ENCODE measurements at regions of chr18 and their contacts with region 1.

Region 1: GRCh38 chr18:13216092-13216582 is 2.4 kb upstream of the LDLRAD4 start:
- DNase-seq: peak; percentile 78
- H3K4me3 Mint-ChIP-seq: peak overlapping the region; percentile 68
- H3K27ac Mint-ChIP-seq: no peak overlapping the region
- H3K4me1 Mint-ChIP-seq: peaks cover 29% of the 10 kb centered on the region
- H3K27me3 Mint-ChIP-seq: peaks cover 22% of the 10 kb centered on the region

Region 2: GRCh38 chr18:13136904-13137669 is 79.0 kb before region 1 on chr18:
- CTCF ChIA-PET with region 1: no interaction called
- intact Hi-C with region 1: no loop called
- DNase-seq: peak; percentile 55
- H3K4me3 Mint-ChIP-seq: peak overlapping the region; percentile 96
- H3K27ac Mint-ChIP-seq: peak overlapping the region; percentile 75
- H3K4me1 Mint-ChIP-seq: peaks cover 24% of the 10 kb centered on the region
- H3K27me3 Mint-ChIP-seq: no peaks in the 10 kb centered on the region

Region 3: DNA sequence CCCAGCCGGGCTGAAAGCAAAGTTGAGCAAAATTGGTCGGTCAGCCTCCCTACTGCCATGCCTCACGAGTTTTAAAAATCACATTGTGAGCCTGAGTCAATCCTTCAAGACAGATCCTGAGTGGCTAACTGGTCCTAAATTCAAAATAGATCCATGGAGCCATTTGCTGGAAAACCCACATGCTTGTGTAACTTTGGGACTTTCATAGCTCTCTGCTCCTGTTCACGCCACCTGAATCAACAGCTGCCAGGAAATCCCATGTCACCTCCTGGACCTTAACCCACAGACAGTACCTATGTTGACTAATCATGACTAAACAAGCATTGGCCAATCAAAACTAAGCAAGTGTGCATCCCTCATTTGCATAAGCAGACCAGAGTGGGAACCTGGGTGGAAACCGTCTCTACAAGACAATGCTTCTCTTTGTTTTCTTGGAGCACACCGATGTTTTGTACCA is 40.4 kb before region 1 on chr18:
- CTCF ChIA-PET with region 1: interaction called, 5 read pairs
- intact Hi-C with region 1: loop called (anchors 2 kb)
- DNase-seq: peak; percentile 72
- H3K4me3 Mint-ChIP-seq: no peak overlapping the region
- H3K27ac Mint-ChIP-seq: no peak overlapping the region
- H3K4me1 Mint-ChIP-seq: peaks cover 12% of the 10 kb centered on the region
- H3K27me3 Mint-ChIP-seq: no peaks in the 10 kb centered on the region

Region 4: DNA sequence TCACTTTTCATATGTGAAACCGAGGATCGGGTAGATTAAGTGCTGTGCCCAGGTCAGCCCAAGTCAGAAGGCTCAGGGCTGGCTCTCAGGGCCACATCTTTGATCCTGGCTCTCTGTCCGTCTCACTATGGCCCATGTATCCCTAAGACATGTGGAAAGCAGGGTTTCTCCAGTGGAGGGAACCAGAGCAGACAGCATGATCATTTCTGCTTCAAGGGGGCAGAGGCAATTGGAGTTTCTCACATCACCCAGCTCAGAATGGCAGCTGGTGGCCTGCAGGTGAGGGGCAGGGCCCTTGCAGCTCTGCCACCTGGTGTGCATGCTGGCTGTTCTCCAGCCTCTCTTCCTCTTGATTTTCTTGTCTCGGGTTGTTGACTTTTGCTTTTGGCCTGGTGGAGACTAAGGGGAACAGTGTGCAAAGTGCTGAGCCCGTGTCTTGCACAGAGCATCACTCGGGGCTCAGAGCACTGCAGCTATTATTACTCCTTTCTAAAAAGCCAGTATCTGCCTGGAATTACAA is 29.4 kb after region 1 on chr18:
- CTCF ChIA-PET with region 1: no interaction called
- intact Hi-C with region 1: no loop called
- DNase-seq: no peak
- H3K4me3 Mint-ChIP-seq: no peak overlapping the region
- H3K27ac Mint-ChIP-seq: no peak overlapping the region
- H3K4me1 Mint-ChIP-seq: no peaks in the 10 kb centered on the region
- H3K27me3 Mint-ChIP-seq: no peaks in the 10 kb centered on the region

Region 5: GRCh38 chr18:13313006-13313686 is 97.0 kb after region 1 on chr18:
- CTCF ChIA-PET with region 1: no interaction called
- intact Hi-C with region 1: loop called (anchors 5 kb)
- DNase-seq: peak; percentile 43
- H3K4me3 Mint-ChIP-seq: peak overlapping the region; percentile 33
- H3K27ac Mint-ChIP-seq: no peak overlapping the region
- H3K4me1 Mint-ChIP-seq: peaks cover 40% of the 10 kb centered on the region
- H3K27me3 Mint-ChIP-seq: no peaks in the 10 kb centered on the region

Region 6: DNA sequence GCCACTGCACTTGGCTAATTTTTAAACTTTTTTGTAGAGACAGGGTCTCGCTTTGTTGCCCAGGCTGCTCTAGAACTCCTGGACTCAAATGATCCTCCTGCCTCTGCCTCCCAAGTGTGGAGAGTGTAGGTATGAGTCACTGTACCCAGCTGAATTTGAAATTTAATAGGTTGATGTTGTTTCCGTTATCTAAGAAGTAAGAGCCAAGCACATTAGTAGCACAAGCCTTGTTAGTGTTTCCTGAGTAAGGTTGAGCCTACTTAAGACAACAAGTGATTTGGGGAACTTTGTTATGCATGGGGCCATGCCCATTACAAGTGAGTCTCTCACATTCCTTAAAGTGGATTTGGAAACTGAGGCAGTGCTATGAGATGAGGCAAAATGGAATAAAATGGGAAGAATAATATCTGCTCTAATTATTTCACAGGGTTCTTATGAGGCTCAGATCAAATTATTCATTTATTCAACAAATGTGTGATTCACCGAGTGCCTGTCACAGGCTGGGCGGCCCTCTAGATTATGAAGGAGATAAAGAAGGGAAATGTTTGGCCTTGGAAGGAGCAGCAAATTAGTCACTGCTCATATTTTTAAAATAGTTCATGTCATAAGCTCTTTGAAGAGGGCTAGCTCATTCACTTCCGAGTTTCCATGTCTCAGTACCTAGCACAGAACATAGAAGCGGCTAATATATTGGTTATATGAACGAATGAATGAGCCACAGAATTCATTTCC is 219.6 kb after region 1 on chr18:
- CTCF ChIA-PET with region 1: interaction called, 6 read pairs
- intact Hi-C with region 1: loop called (anchors 1 kb)
- DNase-seq: no peak
- H3K4me3 Mint-ChIP-seq: no peak overlapping the region
- H3K27ac Mint-ChIP-seq: no peak overlapping the region
- H3K4me1 Mint-ChIP-seq: peaks cover 58% of the 10 kb centered on the region
- H3K27me3 Mint-ChIP-seq: no peaks in the 10 kb centered on the region

Region 7: DNA sequence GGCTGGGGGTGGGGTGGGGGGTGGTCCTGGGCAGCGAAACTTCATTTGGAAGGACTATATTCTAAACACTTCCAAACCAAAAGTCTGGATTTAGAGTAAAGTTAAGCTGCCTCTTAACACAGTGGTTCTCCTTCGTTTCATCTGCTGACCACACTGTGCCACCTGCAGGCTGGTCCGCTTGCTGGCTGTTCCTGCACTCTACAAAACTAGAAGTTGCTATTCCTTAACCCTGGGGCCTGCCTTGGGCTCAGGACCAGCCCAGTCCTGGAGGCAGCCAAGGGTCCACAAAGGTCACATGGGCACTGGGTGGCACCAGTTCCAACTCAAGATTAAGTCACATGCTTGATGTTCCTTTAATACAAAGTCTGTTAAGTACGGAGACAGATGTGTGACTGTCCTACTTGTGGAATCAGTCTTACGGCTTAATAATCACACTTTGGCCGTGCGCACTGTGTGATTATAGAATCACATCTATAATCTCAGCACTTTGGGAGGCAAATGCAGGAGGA is 314.8 kb after region 1 on chr18:
- CTCF ChIA-PET with region 1: interaction called, 15 read pairs
- intact Hi-C with region 1: loop called (anchors 1 kb)
- DNase-seq: peak; percentile 51
- H3K4me3 Mint-ChIP-seq: no peak overlapping the region
- H3K27ac Mint-ChIP-seq: peak overlapping the region; percentile 6
- H3K4me1 Mint-ChIP-seq: peaks cover 26% of the 10 kb centered on the region
- H3K27me3 Mint-ChIP-seq: no peaks in the 10 kb centered on the region

Region 8: DNA sequence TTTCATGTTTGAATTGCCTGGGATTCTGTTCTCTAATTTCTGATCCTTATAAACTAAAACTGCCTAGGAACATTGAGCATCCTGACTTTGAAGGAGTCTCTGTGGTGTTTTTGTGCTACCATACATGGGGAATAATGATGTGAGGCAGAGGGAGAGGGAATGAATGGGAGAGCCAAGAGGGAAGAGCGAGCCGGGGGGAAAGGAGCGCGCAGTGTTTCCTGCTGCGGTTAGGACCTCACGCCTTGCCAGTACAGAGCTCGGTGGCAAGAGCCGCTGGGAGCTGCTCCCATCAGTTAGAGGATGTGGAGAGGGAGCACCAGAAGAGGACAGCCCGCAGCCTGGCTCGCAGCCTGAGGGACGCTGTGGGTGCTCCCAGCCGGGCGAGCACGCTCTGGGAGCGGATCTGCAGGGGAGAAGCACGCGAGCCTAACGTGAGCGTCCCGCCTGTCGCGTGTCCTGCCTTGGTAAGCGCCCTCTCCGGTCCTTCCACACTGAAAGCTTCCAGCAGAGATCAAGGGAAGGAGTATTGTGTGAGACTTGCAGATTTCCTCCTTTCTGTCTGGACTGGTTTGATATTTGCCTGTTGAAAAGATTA is 395.6 kb after region 1 on chr18:
- CTCF ChIA-PET with region 1: interaction called, 7 read pairs
- intact Hi-C with region 1: loop called (anchors 1 kb)
- DNase-seq: peak; percentile 26
- H3K4me3 Mint-ChIP-seq: peak overlapping the region; percentile 71
- H3K27ac Mint-ChIP-seq: no peak overlapping the region
- H3K4me1 Mint-ChIP-seq: peaks cover 74% of the 10 kb centered on the region
- H3K27me3 Mint-ChIP-seq: no peaks in the 10 kb centered on the region

Region 9: DNA sequence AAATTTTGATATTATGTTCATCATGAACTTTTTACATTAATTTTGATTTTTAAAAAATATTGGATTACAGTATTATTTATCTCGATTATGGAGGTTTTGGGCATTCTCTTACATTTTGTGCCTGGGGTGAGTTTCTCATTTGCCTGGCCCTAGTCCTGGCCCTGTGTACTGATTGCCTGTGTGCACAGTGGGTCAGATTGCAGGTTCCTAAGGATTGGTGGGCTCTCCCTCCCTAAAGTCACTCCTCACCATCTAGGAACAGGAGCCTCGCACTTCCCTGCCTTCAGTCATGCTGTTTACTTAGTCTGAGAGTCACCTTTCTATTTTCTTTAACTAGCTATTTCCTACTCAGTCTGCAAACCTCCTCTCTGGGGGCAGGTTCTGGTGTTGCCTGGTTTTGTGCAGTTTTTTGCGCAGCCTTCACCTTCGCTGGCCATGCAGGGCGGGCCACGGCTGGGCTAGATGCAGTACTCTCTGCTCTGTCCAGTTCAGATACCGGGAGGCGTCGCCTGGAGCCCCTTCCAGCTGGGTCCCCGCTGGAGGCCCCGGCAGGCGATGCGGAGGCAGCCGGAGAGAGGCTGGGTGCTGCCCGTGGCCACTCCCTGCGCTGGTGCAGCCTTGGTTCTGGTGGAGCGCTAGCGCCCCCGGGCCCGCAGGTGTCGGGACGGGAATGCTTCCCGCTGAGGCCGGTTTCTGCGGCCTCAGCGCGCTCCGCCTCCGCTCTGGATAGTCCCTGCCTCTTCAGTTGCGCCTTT is 584.5 kb after region 1 on chr18:
- CTCF ChIA-PET with region 1: interaction called, 8 read pairs
- intact Hi-C with region 1: loop called (anchors 1 kb)
- DNase-seq: peak; percentile 77
- H3K4me3 Mint-ChIP-seq: peak overlapping the region; percentile 69
- H3K27ac Mint-ChIP-seq: no peak overlapping the region
- H3K4me1 Mint-ChIP-seq: peaks cover 6% of the 10 kb centered on the region
- H3K27me3 Mint-ChIP-seq: peaks cover 40% of the 10 kb centered on the region